Endothelial cell of umbilical vein (primary cell): ENCODE measurements at regions of chr17 and their contacts with region 1.

Region 1: DNA sequence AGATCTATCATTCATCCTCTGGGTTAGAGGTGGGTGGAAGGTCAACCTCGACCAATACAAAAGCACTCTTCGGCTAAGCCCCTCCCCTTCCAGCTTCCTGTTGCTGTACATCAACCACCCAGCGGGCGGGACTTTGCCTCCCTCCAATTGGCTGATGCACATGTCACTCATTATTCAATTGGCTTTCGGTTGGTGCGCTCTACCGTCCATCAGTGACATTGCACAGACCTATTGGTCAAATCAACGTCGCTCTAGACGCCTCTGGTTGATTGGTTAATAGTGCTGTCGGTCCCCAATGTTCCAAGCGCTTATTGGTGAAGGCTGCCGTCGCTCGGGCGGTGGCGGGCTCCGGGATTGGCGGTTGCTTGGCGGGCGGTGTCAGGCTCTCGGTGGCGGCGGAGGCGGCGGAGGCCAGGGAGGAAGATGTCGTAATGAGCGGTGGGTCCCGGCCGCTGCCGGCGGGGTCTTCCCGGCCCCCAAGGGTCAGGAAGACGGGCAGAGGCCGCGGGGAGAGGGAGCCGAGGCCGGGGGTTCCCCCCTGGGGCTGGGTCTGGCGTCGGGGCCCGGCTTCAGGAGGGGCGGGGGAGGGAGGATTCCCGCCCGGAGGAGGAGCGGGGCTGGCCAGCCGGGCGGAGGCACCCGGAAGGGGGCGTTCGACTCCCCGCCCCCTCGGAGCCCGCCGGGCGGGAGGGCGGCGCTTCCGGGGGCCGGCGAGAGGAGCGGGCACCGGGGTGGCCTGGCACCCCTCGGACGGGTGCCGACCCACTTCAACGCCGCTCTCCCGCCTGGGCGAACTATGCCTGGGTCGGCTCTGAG is at the start of gene SP2:
- DNase-seq: peak; percentile 100
- H3K4me3 ChIP-seq: peak within 1 kb of the TSS; percentile 51 to 90 (median 84)
- H3K27ac ChIP-seq: peak within 1 kb of the TSS; percentile 75
- H3K4me1 ChIP-seq: peaks cover 15% of the 10 kb centered on the region
- H3K27me3 ChIP-seq: no peaks in the 10 kb centered on the region
- CTCF ChIP-seq: no peak
- POLR2A ChIP-seq: peak; percentile 60
- total RNA-seq, gene SP2: 18.5 and 18.6 TPM in 2 replicates

Region 2: DNA sequence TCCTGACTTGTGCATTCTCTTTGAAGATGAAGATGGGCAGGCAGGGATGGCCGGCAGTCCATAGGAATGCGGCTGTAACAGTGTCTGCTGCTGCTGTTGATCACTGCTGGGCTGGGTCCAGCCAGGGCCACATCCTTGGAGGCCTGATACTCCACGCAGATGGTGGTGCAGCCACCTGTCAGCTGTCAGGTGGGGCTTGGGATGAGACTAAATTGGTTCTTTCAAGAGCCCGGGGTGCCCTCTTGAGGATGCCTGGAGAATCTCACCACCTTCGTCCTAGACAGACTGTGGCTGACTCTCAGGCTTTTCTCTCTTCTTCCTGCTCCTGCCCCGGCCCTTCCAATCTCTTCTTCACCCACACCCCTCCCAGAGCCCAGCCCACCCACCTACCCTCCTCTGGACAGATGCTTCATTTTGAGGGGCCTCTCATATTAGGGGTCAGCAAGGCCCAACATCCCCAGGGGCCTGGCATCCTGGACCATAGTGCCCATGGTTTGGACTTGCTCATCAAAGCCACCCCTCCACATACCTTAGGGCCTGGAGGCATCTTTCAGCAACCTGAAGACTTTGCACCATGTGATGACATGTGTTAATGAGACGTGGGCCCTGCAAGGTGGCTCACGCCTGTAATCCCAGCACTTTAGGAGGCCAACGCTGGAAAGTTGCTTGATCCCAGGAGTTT is 93.6 kb before region 1 on chr17:
- CTCF ChIA-PET with region 1: no interaction called
- POLR2A ChIA-PET with region 1: no interaction called
- dilution Hi-C with region 1: no loop called
- intact Hi-C with region 1: no loop called
- DNase-seq: peak; percentile 36
- H3K4me3 ChIP-seq: no peak overlapping the region
- H3K27ac ChIP-seq: no peak overlapping the region
- H3K4me1 ChIP-seq: no peaks in the 10 kb centered on the region
- H3K27me3 ChIP-seq: peaks cover 0 to 2% of the 10 kb centered on the region in 2 experiments
- CTCF ChIP-seq: peak; percentile 47 to 71
- POLR2A ChIP-seq: no peak

Region 3: GRCh38 chr17:47941236-47941994 is 45.4 kb after region 1 on chr17 and contains the start of gene PNPO:
- CTCF ChIA-PET with region 1: interaction called, 7 read pairs
- POLR2A ChIA-PET with region 1: interaction called, 4 read pairs
- dilution Hi-C with region 1: no loop called
- intact Hi-C with region 1: loop called (anchors 1 kb)
- DNase-seq: peak; percentile 99
- H3K4me3 ChIP-seq: peak within 1 kb of the TSS; percentile 63 to 85 (median 84)
- H3K27ac ChIP-seq: peak within 1 kb of the TSS; percentile 47
- H3K4me1 ChIP-seq: peaks cover 15% of the 10 kb centered on the region
- H3K27me3 ChIP-seq: no peaks in the 10 kb centered on the region
- CTCF ChIP-seq: no peak
- POLR2A ChIP-seq: no peak
- total RNA-seq, gene PNPO: 20.6 and 22.0 TPM in 2 replicates

Region 4: GRCh38 chr17:48107168-48108132 is 211.4 kb after region 1 on chr17 and contains the start of gene SNX11:
- CTCF ChIA-PET with region 1: no interaction called
- POLR2A ChIA-PET with region 1: no interaction called
- dilution Hi-C with region 1: no loop called
- intact Hi-C with region 1: loop called (anchors 1 kb)
- DNase-seq: peak; percentile 89
- H3K4me3 ChIP-seq: peak within 1 kb of the TSS; percentile 56 to 99 (median 92)
- H3K27ac ChIP-seq: peak within 1 kb of the TSS; percentile 68
- H3K4me1 ChIP-seq: peaks cover 10% of the 10 kb centered on the region
- H3K27me3 ChIP-seq: no peaks in the 10 kb centered on the region
- CTCF ChIP-seq: no peak
- POLR2A ChIP-seq: peak; percentile 82
- total RNA-seq, gene SNX11: 23.4 and 26.4 TPM in 2 replicates